AG04449 (cell line): ENCODE measurements at regions of chr2 and their contacts with region 1.

Region 1: DNA sequence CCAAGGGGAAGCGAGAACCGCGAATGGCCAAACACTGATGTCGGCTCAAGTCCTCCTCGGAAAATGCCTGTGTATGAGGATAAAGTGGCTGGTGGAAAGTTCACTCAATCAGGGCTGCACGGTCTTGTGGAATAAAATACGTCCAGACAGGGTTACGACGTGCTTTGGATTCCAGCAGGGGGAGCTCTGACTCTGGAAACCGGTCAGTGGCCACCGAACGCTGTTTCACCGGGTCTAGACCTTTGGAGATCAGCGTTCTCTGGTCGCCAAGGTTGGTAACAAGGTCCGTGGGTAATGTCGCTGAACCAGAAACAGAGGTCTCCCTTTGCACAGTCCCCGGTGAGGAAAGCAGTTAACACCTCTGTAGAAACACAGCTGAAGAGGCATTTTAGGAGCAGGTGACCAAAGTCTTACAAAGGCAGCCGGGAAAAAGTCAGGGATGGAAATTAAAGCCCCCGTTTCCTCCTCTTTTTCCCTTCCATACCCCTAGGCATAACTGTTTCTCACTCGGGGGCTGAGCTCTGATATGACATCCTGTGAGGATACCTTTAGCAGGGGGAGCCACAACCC is 47.8 kb downstream of the CDCA7 start:
- DNase-seq: peak; percentile 23
- H3K4me3 ChIP-seq: peak overlapping the region; percentile 47
- CTCF ChIP-seq: peak; percentile 78

Region 2: DNA sequence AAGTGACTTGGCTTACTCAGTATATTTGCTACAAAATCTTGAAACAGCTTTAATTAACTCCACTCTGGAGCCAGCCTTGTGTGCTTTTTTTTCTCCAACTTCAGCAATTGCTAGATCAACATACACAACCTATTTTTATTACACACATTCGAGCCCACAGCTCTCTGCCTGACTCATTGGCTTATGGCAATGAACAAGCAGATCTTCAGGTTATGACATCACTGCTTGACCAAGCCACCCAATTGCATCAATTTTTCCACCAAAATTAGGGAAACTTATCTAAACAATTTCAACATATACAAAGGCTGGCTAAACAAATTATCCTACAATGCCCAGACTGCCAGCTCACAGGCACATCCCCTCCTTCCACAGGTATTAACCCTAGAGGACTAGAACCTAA is 886.2 kb before region 1 on chr2:
- CTCF ChIA-PET with region 1: no interaction called
- POLR2A ChIA-PET with region 1: no interaction called
- DNase-seq: peak; percentile 58
- H3K4me3 ChIP-seq: no peak overlapping the region
- CTCF ChIP-seq: no peak

Region 3: GRCh38 chr2:173414823-173415322 is 12.4 kb after region 1 on chr2:
- CTCF ChIA-PET with region 1: interaction called, 80 read pairs
- POLR2A ChIA-PET with region 1: no interaction called
- DNase-seq: no peak
- H3K4me3 ChIP-seq: no peak overlapping the region
- CTCF ChIP-seq: no peak

Region 4: GRCh38 chr2:173448938-173449471 is 46.5 kb after region 1 on chr2:
- CTCF ChIA-PET with region 1: interaction called, 123 read pairs
- POLR2A ChIA-PET with region 1: no interaction called
- DNase-seq: no peak
- H3K4me3 ChIP-seq: peak overlapping the region; percentile 41
- CTCF ChIP-seq: peak; percentile 83

Region 5: DNA sequence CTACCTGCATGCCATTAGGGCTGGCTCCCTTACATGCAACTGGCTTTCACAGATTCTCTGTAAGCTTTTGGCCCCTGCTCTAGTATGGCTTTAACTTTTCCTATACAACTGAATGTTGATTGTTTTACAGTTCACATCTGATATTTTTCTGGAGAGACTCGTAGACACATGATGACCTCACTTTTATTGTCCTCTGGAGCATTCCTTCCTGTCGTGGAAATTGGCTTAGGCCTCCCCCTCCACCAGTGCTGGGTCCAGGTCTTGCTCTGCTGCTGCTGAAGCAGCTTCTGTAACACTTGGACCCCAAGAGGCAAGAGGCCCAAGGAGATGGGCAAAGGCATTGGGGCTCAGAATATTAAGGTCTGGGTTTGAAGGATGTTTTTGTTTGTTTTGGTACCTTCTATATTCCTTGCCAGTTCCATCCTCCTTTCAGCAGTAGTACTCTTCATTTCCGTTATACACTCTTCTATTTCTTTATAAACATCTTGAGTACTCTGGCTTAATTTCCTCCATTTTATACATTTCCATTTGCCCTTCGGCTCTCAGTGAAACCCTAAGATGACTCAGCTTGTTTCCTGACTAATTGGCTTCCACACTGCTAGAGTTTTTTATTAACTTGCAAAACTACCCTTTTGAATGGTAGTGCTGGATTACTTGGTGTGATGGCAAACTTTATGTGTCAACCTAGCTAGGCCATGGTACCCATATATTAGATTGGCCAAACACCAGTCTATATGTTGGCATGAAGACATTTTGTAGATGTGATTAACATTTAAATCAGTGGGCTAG is 172.0 kb after region 1 on chr2:
- CTCF ChIA-PET with region 1: interaction called, 10 read pairs
- POLR2A ChIA-PET with region 1: no interaction called
- DNase-seq: no peak
- H3K4me3 ChIP-seq: no peak overlapping the region
- CTCF ChIP-seq: no peak

Region 6: DNA sequence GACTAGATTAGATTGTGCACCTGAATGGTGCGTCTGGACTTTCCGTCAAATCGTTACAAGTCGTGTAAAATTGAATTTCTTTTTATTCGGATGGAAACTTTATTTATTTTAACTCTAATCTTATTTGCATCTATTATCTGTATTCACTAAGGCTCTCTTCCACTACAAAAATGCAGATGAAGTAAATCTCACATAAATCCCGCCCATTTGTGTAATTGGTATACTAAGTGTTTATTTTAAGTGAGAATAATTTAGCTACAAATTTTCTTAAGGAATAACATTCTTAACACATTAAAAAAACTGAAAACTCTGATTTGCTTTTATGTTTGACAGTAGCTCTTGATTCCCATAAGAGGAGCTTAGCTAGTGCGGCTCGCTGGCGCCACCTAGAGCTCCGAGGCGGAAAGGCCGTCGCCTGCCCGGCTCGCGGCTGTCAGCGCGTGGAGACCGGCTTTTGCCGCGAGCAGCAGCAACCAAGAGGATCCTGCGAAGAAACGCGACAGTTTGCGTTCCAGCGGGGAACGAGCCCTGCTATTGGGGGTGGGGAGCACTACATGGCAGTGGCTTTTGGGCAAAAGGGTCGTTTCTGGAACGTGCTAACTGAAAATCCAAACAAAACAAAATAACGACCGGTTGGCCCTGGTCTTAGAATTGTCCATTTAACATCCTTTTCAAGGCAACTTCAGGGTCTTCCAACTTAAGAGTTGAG is 939.0 kb after region 1 on chr2:
- CTCF ChIA-PET with region 1: interaction called, 36 read pairs
- POLR2A ChIA-PET with region 1: no interaction called
- DNase-seq: no peak
- H3K4me3 ChIP-seq: peak overlapping the region; percentile 13
- CTCF ChIP-seq: peak; percentile 96